GM12878 (cell line): ENCODE measurements at regions of chr6 and their contacts with region 1.

Region 1: GRCh38 chr6:12605888-12606345 is 110.7 kb upstream of the PHACTR1 start:
- DNase-seq: peak; percentile 90
- ATAC-seq: peak; percentile 66
- H3K4me3 ChIP-seq: 0 out of 2 replicates have a peak overlapping the region, but pooled peaks have one; percentile 28
- H3K27ac ChIP-seq: peak overlapping the region; percentile 41
- H3K4me1 ChIP-seq: peaks cover 46% of the 10 kb centered on the region
- H3K27me3 ChIP-seq: no peaks in the 10 kb centered on the region
- CTCF ChIP-seq: peak; percentile 70 to 87 (median 80); a peak in 5 of 6 replicates
- EP300 ChIP-seq: peak in 1 of 2 experiments; percentile 64; a peak in 2 of 4 replicates
- POLR2A ChIP-seq: no peak
- RAD21 ChIP-seq: peak; percentile 80

Region 2: DNA sequence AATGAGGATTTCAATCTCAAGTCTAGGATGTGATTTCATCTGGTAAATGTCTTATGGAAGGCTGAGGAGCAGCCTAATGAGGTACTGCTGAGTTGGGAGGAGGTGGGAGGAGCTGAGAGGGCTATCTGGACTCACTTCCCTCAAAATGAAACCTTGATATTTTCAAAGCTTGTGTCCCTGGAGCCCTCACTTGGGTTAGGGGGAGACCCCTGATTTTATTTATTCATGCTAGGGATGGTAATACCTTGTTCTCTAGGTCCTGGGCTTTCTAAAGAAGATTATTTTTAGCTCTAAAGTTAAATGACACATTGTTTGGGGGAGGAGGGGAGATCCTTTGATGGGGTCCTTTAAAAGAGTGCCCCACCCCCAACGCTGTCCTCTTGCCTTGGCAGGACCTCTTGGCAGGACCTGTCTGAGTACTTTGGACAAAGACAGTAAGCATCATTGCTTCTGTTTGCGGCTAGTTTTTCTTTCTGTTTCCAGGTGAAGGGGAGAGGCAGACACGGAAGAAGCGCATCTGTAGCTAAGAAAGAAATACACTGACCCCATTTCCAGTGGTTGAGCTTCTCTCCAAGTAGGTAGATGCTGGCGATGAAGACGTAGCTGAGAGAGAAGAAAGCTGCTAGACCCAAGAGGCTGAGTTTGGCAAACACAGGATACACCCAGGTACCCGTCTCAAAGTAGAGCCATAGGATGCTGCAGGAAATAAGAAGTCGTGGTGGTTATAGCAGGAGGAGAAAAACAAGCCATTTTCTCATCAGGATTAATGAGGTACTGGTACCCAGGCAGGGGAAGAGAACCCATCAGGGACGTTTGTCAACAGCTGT is 882.9 kb before region 1 on chr6:
- CTCF ChIA-PET with region 1: interaction called, 8 read pairs
- POLR2A ChIA-PET with region 1: no interaction called
- RAD21 ChIA-PET with region 1: interaction called, 4 read pairs
- SMC1A ChIA-PET with region 1: interaction called, 25 read pairs
- in situ Hi-C with region 1: no loop called
- intact Hi-C with region 1: loop called (anchors 10 kb)
- DNase-seq: no peak
- ATAC-seq: peak; percentile 78
- H3K4me3 ChIP-seq: peak overlapping the region; percentile 63
- H3K27ac ChIP-seq: peak overlapping the region; percentile 88
- H3K4me1 ChIP-seq: peaks cover 8% of the 10 kb centered on the region
- H3K27me3 ChIP-seq: no peaks in the 10 kb centered on the region
- CTCF ChIP-seq: no peak
- EP300 ChIP-seq: no peak
- POLR2A ChIP-seq: no peak; the same call in 1 of the 2 replicates
- RAD21 ChIP-seq: 0 out of 2 replicates have a peak, but pooled peaks have one; percentile 4

Region 3: DNA sequence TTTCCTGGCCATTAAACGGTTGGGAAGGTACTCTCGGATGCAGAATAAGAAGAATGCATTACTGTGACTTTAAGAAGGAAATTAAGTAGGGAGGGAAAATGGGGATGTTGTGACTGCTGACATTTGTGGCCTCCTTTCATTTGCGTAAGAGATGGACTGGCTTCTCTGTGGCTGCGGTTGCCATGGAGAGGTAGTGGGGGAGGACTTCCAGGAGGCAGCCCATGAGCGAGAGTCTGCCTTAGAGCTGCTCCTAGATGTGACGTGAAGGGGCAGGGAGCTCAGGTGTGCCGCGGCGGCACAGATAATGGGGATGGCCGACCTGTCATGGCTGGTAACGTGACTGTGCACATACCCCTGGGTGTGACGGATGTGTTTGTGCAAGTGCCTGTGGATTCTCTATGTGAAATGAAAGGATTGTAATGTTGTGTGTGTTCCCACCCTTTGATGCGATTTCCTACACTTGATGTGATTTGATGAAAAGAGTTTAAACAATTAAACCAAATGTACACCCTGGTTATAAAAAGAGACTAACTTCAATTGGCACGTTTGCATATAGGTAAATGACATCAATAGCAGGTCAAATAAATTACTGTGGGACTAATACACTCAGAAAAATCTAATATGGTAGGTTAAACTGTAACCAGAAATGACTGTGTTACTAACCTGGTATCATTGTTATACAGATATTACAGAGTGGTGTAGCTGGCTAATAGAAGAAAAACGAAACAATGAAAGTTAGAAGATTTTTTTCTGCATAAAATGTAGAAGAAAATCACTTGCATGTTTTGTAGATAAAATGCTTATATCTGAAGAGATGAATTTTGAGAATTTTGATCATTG is 544.9 kb before region 1 on chr6:
- CTCF ChIA-PET with region 1: interaction called, 4 read pairs
- POLR2A ChIA-PET with region 1: no interaction called
- RAD21 ChIA-PET with region 1: interaction called, 7 read pairs
- SMC1A ChIA-PET with region 1: interaction called, 5 read pairs
- in situ Hi-C with region 1: loop called (anchors 5 kb)
- intact Hi-C with region 1: no loop called
- DNase-seq: peak; percentile 87
- ATAC-seq: peak; percentile 82
- H3K4me3 ChIP-seq: peak overlapping the region; percentile 57; the same call in 1 of the 2 replicates
- H3K27ac ChIP-seq: peak overlapping the region; percentile 85
- H3K4me1 ChIP-seq: peaks cover 44% of the 10 kb centered on the region
- H3K27me3 ChIP-seq: no peaks in the 10 kb centered on the region
- CTCF ChIP-seq: no peak
- EP300 ChIP-seq: peak; percentile 94
- POLR2A ChIP-seq: peak; percentile 70
- RAD21 ChIP-seq: no peak

Region 4: GRCh38 chr6:12313992-12314805 is 291.7 kb before region 1 on chr6:
- CTCF ChIA-PET with region 1: interaction called, 21 read pairs
- POLR2A ChIA-PET with region 1: no interaction called
- RAD21 ChIA-PET with region 1: interaction called, 24 read pairs
- SMC1A ChIA-PET with region 1: interaction called, 21 read pairs
- in situ Hi-C with region 1: no loop called
- intact Hi-C with region 1: no loop called
- DNase-seq: no peak
- ATAC-seq: no peak
- H3K4me3 ChIP-seq: no peak overlapping the region
- H3K27ac ChIP-seq: no peak overlapping the region
- H3K4me1 ChIP-seq: no peaks in the 10 kb centered on the region
- H3K27me3 ChIP-seq: no peaks in the 10 kb centered on the region
- CTCF ChIP-seq: no peak
- EP300 ChIP-seq: no peak
- POLR2A ChIP-seq: no peak
- RAD21 ChIP-seq: no peak

Region 5: DNA sequence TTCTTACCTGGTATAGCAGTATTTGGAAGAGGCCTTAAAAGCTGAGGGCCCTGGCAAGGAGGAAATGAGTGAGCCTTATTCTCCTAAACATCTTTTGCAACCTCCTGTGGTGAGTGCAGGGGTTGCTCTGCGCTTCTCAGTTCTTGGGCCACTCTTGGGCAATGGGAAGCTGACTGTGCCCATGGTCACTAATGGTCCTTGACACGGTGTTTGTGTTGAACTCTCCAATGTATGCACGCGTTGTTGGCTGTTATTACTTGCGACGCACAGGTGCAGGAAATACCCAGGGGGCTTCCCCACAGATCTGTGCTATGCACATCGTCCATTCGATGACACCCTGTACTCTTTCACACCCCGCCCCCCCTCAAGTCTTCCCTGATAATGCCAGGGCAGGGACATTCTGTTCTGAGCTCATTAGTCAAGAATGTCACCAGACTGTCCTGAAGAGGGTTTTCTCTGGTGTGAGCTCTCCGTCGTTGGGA is 236.1 kb before region 1 on chr6:
- CTCF ChIA-PET with region 1: interaction called, 27 read pairs
- POLR2A ChIA-PET with region 1: interaction called, 8 read pairs
- RAD21 ChIA-PET with region 1: interaction called, 19 read pairs
- SMC1A ChIA-PET with region 1: interaction called, 47 read pairs
- in situ Hi-C with region 1: no loop called
- intact Hi-C with region 1: no loop called
- DNase-seq: peak; percentile 73
- ATAC-seq: peak; percentile 92
- H3K4me3 ChIP-seq: no peak overlapping the region
- H3K27ac ChIP-seq: peak overlapping the region; percentile 35
- H3K4me1 ChIP-seq: peaks cover 13% of the 10 kb centered on the region
- H3K27me3 ChIP-seq: no peaks in the 10 kb centered on the region
- CTCF ChIP-seq: peak; percentile 25 to 41 (median 30); a peak in 4 of 6 replicates
- EP300 ChIP-seq: peak; percentile 55 to 78; a peak in 2 of 4 replicates
- POLR2A ChIP-seq: no peak
- RAD21 ChIP-seq: peak; percentile 62

Region 6: GRCh38 chr6:12595161-12595811 is 10.6 kb before region 1 on chr6:
- CTCF ChIA-PET with region 1: interaction called, 22 read pairs
- POLR2A ChIA-PET with region 1: no interaction called
- RAD21 ChIA-PET with region 1: interaction called, 32 read pairs
- SMC1A ChIA-PET with region 1: interaction called, 22 read pairs
- in situ Hi-C with region 1: no loop called
- intact Hi-C with region 1: no loop called
- DNase-seq: no peak
- ATAC-seq: peak; percentile 75
- H3K4me3 ChIP-seq: no peak overlapping the region
- H3K27ac ChIP-seq: no peak overlapping the region
- H3K4me1 ChIP-seq: peaks cover 14% of the 10 kb centered on the region
- H3K27me3 ChIP-seq: no peaks in the 10 kb centered on the region
- CTCF ChIP-seq: no peak
- EP300 ChIP-seq: no peak; a peak in 2 of 4 replicates
- POLR2A ChIP-seq: no peak
- RAD21 ChIP-seq: no peak